HepG2 (cell line): ENCODE measurements at regions of chr10 and their contacts with region 1.

Region 1: DNA sequence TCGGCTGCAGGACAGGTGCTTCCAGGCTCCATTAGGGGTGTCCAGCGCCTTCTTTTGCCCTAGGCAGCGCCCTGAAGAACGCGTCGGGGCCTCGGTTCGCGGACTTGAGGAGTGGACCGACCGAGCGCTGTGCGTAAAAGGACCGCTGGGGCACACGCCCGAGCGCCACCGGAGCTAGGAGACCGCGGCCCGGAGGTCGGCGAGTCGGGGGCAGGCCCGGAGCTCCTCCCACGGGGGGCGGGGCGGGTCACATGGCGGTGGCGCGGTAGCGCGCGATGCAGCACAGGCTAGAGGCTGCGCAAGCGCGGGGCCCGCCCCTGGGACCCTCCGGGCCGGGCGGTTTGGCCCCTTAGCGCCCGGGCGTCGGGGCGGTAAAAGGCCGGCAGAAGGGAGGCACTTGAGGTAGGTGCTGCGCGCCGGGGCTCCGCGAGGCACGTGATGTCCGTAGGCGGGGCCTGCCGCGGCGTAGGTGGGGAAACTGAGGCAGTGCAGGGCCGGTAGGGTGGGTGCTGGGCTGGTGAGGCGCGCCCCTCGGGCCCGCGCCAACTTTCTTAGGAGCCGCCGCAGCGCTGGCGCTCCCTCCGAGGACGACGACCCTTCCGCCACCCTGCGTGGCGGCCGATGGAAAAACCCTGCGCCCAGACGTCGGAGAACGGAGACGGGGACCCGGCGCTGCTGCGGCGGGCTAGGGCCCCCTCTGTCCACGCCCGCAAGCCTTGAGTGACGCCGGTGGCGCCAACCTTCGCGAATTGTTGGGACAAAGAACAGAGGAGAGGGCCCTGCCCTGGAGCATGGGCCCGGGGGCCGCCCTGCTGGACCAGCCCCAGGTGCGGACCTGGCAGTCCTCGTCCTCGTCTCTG is at the start of gene PRXL2A:
- DNase-seq: peak; percentile 74
- ATAC-seq: peak; percentile 88
- H3K4me3 ChIP-seq: peak within 1 kb of the TSS; percentile 76 to 86 (median 78)
- H3K27ac ChIP-seq: peak within 1 kb of the TSS; percentile 99
- H3K4me1 ChIP-seq: peaks cover 67% of the 10 kb centered on the region
- H3K27me3 ChIP-seq: no peaks in the 10 kb centered on the region; a peak in 1 of 5 replicates
- CTCF ChIP-seq: peak; percentile 15; the same call in 1 of the 2 replicates
- EP300 ChIP-seq: peak in 1 of 2 experiments; percentile 52; a peak in 1 of 4 replicates
- POLR2A ChIP-seq: peak; percentile 81 to 98
- RAD21 ChIP-seq: peak; percentile 20
- total RNA-seq, gene PRXL2A: 57.4 and 79.9 TPM in 2 replicates

Region 2: GRCh38 chr10:80289451-80290287 is 118.8 kb before region 1 on chr10 and contains the start of gene MAT1A:
- CTCF ChIA-PET with region 1: no interaction called
- POLR2A ChIA-PET with region 1: interaction called, 30 read pairs
- in situ Hi-C with region 1: no loop called
- intact Hi-C with region 1: no loop called
- DNase-seq: peak; percentile 84
- ATAC-seq: peak; percentile 76
- H3K4me3 ChIP-seq: peak within 1 kb of the TSS; percentile 44 to 67 (median 62)
- H3K27ac ChIP-seq: peak within 1 kb of the TSS; percentile 94
- H3K4me1 ChIP-seq: peaks cover 93% of the 10 kb centered on the region
- H3K27me3 ChIP-seq: no peaks in the 10 kb centered on the region; a peak in 1 of 5 replicates
- CTCF ChIP-seq: peak; percentile 66
- EP300 ChIP-seq: peak in 1 of 2 experiments; percentile 50; a peak in 2 of 4 replicates
- POLR2A ChIP-seq: peak; percentile 35 to 76; a peak in 3 of 4 replicates
- RAD21 ChIP-seq: 0 out of 2 replicates have a peak, but pooled peaks have one; percentile 8
- total RNA-seq, gene MAT1A: 76.9 and 101 TPM in 2 replicates

Region 3: GRCh38 chr10:80392276-80392675 is 16.2 kb before region 1 on chr10:
- CTCF ChIA-PET with region 1: no interaction called
- POLR2A ChIA-PET with region 1: interaction called, 26 read pairs
- in situ Hi-C with region 1: no loop called
- intact Hi-C with region 1: no loop called
- DNase-seq: no peak
- ATAC-seq: peak; percentile 13; the same call in 2 of the 3 replicates
- H3K4me3 ChIP-seq: peak overlapping the region in 1 of 3 experiments; percentile 30; a peak in 3 of 6 replicates
- H3K27ac ChIP-seq: no peak overlapping the region
- H3K4me1 ChIP-seq: peaks cover 33% of the 10 kb centered on the region
- H3K27me3 ChIP-seq: peaks cover 2 to 5% of the 10 kb centered on the region in 2 experiments; a peak in 2 of 5 replicates
- CTCF ChIP-seq: no peak
- EP300 ChIP-seq: no peak
- POLR2A ChIP-seq: no peak
- RAD21 ChIP-seq: no peak

Region 4: DNA sequence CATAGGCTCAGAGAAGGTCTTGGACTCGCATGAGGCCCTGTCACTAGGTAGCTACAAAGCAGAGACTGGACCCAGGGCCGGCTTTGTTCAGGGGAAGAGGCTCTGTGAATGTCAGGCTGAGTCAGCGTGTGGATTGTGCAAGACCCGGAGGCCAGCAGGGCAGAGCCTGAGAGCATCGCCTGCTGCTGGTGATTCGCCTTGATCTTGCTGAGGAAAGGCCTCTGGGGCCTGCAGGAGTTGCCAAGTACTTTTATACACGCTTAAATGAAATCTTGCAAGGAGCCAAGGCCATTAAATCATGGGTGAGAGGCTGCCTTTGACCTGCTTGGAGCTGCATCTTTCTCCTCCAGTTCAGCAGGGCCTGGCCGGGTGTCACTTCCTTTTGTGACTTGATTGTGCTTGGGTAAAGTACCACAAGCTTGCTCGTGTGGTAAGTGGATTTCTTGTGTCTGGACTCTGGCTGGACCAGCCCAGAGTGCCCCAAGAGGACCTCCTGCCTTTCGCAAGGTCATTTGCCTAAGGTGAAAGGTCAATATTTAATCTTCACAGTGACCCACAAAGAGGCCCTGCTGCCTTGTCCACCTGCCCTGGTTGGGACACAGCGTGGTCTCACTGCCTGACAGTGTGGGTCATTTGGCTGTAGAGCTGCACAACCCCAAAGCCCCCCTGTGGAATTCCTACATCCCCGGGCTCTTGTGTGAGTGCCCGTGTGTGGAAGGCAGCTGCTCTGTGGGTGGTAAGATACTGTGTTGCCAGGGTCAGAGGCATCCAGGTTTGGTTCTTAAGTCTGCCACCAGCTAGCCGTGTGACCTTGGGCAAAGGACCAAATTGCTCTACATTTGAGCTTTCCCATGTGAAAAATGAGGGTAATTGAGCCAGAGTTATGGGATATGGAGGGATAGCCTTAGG is 90.6 kb after region 1 on chr10:
- CTCF ChIA-PET with region 1: no interaction called
- POLR2A ChIA-PET with region 1: interaction called, 39 read pairs
- in situ Hi-C with region 1: no loop called
- intact Hi-C with region 1: no loop called
- DNase-seq: peak; percentile 94
- ATAC-seq: peak; percentile 95
- H3K4me3 ChIP-seq: peak overlapping the region in 2 of 3 experiments; percentile 24 to 45; a peak in 3 of 6 replicates
- H3K27ac ChIP-seq: peak overlapping the region; percentile 90
- H3K4me1 ChIP-seq: peaks cover 100% of the 10 kb centered on the region
- H3K27me3 ChIP-seq: no peaks in the 10 kb centered on the region
- CTCF ChIP-seq: peak; percentile 31; the same call in 1 of the 2 replicates
- EP300 ChIP-seq: peak; percentile 80 to 86
- POLR2A ChIP-seq: peak; percentile 35 to 44; a peak in 1 of 4 replicates
- RAD21 ChIP-seq: no peak; the same call in 1 of the 2 replicates